Ascending aorta (tissue), 2 donors: ENCODE measurements at regions of chr6 and their contacts with region 1.

Region 1: GRCh38 chr6:71721642-71722041 is 164.7 kb upstream of the RIMS1 start:
- DNase-seq: peak in 1 of 2 donors; percentile 87
- H3K4me3 ChIP-seq: no peak overlapping the region
- H3K27ac ChIP-seq: peak overlapping the region; percentile 63 to 68
- H3K4me1 ChIP-seq: peaks cover 0 to 28% of the 10 kb centered on the region in 2 donors
- H3K27me3 ChIP-seq: no peaks in the 10 kb centered on the region
- CTCF ChIP-seq: no peak

Region 2: DNA sequence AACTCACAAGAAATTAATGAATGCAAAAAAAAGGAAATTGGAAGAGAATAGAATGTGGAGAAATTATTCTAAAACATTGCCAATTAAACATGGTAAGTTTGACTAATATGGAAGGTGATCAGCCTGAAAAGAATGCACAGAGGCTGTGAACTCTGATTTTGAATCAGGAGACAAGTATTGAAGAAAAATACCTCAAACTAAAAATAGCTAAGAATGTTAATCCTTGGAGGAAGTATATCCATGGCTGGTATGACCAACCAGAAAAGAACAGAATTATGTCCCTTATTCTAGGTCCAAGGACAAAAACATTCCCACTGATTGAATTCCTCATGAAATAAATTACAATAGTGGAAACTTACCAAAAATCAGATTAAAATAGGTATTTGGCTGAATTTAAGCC is 157.4 kb after region 1 on chr6:
- intact Hi-C with region 1: loop called (anchors 5 kb)
- DNase-seq: no peak
- H3K4me3 ChIP-seq: no peak overlapping the region
- H3K27ac ChIP-seq: peak overlapping the region in 1 of 2 donors; percentile 32
- H3K4me1 ChIP-seq: no peaks in the 10 kb centered on the region
- H3K27me3 ChIP-seq: no peaks in the 10 kb centered on the region
- CTCF ChIP-seq: no peak